ENCODE measurements at regions of chr7 and their contacts with region 1.

Region 1: DNA sequence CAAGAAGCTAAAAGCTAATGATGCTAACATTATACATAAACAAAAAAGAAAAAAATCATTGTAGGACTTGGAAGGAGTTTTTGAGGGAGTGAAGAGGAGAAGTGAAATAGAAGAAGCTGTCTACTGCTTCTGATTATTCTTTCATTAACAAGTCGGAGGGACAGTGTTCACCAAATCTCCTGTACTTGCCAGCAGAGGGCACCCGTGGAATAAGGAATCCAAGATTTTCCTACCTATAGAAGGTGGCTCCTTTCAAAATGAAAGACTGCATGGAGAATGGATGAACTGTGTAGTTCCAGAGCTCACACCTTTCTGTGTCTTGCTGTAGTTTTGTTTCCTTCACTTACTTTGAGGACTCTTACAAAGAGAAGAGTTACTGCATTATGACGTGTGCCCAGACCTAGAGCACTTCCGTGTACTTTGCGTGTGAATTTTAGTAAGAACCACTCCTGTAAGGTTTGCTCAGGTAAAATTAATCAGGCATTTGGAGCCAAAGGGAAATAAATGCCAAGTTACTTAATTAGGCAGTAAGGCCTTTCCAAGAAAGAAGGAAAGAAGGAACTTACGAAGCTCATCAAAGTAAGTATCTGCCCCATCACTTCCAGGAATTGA is 145.1 kb downstream of the SEMA3D start:
- DNase-seq: no peak

Region 2: DNA sequence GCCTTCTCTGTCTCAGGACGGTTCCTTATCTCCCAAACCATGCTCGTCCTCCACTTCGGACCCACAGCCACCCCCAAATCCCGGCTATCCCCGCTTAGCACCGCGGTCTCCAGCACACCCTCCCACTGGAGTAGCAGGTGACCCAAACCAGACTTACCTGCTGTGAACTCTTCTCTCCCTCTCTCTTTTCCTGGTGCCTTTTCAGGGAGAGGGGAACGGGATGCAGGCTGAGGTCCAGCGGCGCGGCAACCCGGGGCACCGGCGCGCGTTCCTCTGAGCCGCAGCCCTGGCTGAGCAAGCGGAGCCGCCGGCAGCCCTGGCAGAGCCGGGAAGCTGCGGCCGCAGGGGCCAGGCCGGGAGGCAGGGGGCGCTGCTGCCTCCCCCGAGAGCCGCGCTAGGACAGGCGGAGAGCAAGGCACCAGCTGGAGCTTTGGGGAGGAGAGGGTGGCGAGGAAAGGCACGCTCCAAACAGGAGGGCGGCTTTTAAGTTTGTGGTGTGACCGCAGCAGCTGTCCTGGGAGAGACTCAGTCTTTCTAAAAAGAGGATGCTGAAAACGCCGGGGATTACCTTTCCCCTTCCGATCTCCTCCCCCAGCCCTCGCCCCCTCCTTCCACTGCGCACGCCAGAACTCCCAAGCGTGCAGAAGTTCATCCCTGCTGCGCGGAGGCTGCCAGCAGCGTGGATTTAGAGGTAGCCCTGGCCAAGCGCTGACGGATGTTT is 145.0 kb after region 1 on chr7 and contains the start of gene SEMA3D:
- intact Hi-C with region 1: loop called (anchors 5 kb)
- DNase-seq: peak; percentile 77
- total RNA-seq, gene SEMA3D: 1.9 TPM

Region 3: DNA sequence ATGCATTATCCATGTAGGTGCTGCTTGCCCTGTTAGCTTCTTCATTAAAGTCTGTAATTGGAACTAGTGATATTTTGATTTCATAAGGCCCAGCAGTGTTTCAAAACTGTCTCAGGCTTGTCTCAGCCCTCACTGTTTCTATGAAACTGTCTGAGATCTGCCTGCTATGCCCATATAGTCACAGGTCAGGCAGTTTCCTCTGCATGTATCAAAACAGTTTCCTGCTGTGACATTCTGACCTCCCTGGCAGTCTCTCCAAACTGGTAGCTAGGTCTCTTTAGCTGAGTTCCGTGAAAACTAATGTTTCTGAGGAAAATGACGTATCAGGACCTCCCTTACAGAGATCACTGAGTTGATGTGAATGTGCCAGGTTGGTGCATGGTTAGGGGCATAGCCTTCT is 164.0 kb after region 1 on chr7:
- intact Hi-C with region 1: no loop called
- DNase-seq: no peak

Measured in cardiac septum (tissue), 1 donor.